ENCODE measurements at regions of chr2 and their contacts with region 1.

Region 1: GRCh38 chr2:47344890-47345589 is 57.9 kb upstream of the MSH2 start:
- DNase-seq: peak; percentile 88

Region 2: DNA sequence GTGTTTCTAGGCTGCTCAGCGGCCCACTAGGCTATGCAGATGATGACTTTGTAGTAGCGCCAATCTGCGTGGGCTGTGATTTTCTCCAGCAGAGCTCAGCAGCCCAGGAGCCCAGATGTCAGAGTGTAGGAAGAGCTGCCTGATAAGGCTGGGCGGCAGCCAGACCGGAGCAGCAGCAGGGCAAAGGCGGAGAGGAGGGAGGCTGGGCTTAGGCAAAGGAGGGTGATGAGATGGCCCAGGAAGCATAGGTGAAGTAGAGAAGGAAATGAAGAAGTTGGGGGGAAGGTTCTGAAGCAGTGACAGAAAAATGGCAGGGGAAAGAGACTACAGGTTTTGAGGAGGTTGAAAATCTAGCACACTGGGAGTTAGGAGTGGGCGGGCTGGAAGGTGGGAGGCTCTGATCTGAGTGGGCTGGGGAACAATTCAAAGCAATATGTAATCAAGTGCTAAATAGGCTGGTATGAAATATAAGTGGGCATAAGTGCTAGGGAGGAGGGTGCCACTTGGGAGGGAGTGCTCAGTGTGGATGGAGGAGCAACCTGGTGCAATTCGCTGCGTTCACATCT is 139.4 kb before region 1 on chr2:
- CTCF ChIA-PET with region 1: no interaction called
- POLR2A ChIA-PET with region 1: no interaction called
- DNase-seq: no peak

Region 3: GRCh38 chr2:47402805-47403608 is 58.0 kb after region 1 on chr2 and contains the start of gene MSH2:
- CTCF ChIA-PET with region 1: no interaction called
- POLR2A ChIA-PET with region 1: interaction called, 13 read pairs
- DNase-seq: peak; percentile 98